Endothelial cell of umbilical vein (primary cell): ENCODE measurements at regions of chr3 and their contacts with region 1.

Region 1: GRCh38 chr3:11719406-11720230 is 75.9 kb upstream of the VGLL4 start:
- DNase-seq: peak; percentile 66
- H3K4me3 ChIP-seq: peak overlapping the region; percentile 92 to 96 (median 93)
- H3K27ac ChIP-seq: peak overlapping the region; percentile 76
- H3K4me1 ChIP-seq: peaks cover 21% of the 10 kb centered on the region
- H3K27me3 ChIP-seq: peaks cover under 1 to 9% of the 10 kb centered on the region in 2 experiments
- CTCF ChIP-seq: no peak
- POLR2A ChIP-seq: no peak

Region 2: GRCh38 chr3:11662402-11662990 is 57.1 kb before region 1 on chr3:
- CTCF ChIA-PET with region 1: no interaction called
- POLR2A ChIA-PET with region 1: no interaction called
- dilution Hi-C with region 1: no loop called
- intact Hi-C with region 1: loop called (anchors 2 kb)
- DNase-seq: peak; percentile 31
- H3K4me3 ChIP-seq: no peak overlapping the region
- H3K27ac ChIP-seq: no peak overlapping the region
- H3K4me1 ChIP-seq: peaks cover 12% of the 10 kb centered on the region
- H3K27me3 ChIP-seq: no peaks in the 10 kb centered on the region
- CTCF ChIP-seq: peak; percentile 33 to 43
- POLR2A ChIP-seq: no peak

Region 3: DNA sequence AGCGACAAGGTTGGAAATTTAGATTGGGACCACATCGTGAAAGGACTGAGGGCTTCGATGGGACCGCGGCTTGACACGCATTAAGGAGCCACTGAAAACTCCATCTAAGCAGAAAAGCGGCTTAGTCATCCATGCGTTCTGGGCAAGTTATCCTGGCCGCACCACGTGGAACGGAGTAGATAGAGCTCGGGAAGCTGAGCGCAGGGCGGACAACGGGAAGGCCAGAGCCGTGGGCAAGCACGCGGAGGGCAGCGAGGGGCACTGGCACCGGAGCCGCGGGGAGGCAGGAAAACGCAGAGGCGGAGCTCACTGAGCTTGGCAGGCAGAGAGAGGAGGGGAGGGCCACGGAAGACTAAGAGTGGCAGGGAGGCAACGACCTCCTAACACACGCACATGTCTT is 14.6 kb before region 1 on chr3:
- CTCF ChIA-PET with region 1: interaction called, 4 read pairs
- POLR2A ChIA-PET with region 1: no interaction called
- dilution Hi-C with region 1: no loop called
- intact Hi-C with region 1: loop called (anchors 1 kb)
- DNase-seq: peak; percentile 82
- H3K4me3 ChIP-seq: no peak overlapping the region
- H3K27ac ChIP-seq: no peak overlapping the region
- H3K4me1 ChIP-seq: no peaks in the 10 kb centered on the region
- H3K27me3 ChIP-seq: no peaks in the 10 kb centered on the region
- CTCF ChIP-seq: no peak
- POLR2A ChIP-seq: no peak

Region 4: GRCh38 chr3:11764931-11765363 is 45.3 kb after region 1 on chr3:
- CTCF ChIA-PET with region 1: interaction called, 5 read pairs
- POLR2A ChIA-PET with region 1: no interaction called
- dilution Hi-C with region 1: no loop called
- intact Hi-C with region 1: loop called (anchors 2 kb)
- DNase-seq: peak; percentile 94
- H3K4me3 ChIP-seq: no peak overlapping the region
- H3K27ac ChIP-seq: peak overlapping the region; percentile 89
- H3K4me1 ChIP-seq: peaks cover 9% of the 10 kb centered on the region
- H3K27me3 ChIP-seq: no peaks in the 10 kb centered on the region
- CTCF ChIP-seq: no peak
- POLR2A ChIP-seq: peak; percentile 47

Region 5: DNA sequence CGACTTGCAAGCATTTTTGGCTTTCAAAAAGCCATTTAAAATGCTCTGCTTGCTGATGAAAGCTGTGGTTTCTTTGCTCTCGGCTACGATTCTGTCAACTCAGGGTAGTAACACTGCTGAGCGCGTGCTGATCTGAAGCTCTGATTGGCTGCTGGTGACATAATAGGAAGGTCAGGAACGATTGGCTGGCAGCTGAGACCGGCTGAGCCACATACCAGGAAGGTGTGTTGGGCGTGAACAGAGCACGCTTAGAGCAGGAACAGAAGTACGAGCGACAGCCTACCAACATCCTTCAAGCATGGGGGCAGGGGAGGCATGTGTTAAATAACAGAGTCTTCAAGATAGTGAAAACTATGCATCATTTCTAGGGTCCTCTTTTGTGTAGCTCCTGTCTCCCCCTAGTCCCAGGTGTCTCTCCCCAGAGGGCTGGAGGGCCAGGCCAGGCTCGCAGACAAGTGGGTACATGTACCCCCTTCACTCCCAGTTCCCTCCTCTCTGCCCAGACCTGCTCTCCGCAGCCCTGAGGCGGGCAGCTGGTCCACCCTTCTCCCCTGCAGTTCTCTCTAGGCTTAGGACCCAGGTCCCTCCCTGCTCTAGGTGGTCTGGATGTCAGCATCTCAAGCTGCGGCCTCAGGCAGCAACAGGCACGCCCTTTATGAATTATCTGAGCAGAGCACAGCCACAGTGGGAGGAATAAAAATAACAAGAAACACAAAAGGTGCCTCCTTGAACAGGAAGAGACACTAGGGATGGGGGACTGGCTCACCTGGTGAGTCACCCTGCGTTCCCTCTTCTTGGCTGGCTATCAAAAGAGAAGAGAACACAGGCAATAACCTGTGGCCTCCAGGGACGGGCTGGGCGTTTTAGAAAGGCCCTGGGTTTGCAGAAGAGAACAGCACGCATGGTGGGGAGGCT is 51.1 kb after region 1 on chr3:
- CTCF ChIA-PET with region 1: no interaction called
- POLR2A ChIA-PET with region 1: no interaction called
- dilution Hi-C with region 1: no loop called
- intact Hi-C with region 1: loop called (anchors 2 kb)
- DNase-seq: peak; percentile 85
- H3K4me3 ChIP-seq: no peak overlapping the region
- H3K27ac ChIP-seq: no peak overlapping the region
- H3K4me1 ChIP-seq: peaks cover 11% of the 10 kb centered on the region
- H3K27me3 ChIP-seq: no peaks in the 10 kb centered on the region
- CTCF ChIP-seq: no peak
- POLR2A ChIP-seq: no peak

Region 6: DNA sequence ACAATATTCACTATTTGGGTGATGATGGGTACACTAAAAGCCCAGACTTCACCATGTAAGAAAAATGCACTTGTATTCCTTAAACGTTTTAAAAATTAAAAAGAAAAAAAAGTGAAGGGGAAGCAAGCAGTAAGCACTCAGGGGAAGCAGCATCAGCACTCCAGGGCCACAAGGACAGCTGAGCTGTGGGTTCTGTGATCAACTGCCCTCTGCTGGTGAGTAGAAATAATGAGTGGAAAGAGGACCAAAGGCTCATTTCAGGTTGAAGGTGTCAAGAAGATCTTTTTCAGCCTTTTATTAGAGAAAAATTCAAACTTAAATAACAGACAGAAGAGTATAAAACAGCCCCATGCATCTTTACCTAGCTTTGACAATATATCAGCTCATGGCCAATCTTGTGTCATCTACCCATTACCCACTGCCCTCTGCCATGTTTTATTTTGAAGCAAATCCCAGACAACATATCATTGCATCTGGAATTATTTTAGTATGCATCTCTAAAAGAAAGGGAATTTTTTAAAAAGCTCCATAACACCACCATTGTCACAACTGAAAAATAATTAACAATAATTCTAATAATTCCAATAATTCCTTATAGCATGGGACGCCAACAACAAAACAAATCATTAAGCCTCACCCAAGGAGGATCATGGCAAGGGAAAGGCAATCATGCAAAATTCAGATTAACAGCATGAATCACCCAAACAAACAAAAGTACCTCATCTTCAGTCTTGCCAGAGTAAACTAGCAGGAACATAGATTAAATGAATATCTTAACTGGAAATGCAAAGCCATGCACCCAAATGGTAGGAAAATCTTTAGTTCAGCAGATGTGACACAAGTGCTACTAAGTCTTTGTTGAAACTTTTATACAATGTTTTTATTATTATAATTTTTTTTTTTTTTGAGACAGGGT is 84.6 kb after region 1 on chr3:
- CTCF ChIA-PET with region 1: interaction called, 4 read pairs
- POLR2A ChIA-PET with region 1: no interaction called
- dilution Hi-C with region 1: no loop called
- intact Hi-C with region 1: loop called (anchors 1 kb)
- DNase-seq: peak; percentile 53
- H3K4me3 ChIP-seq: no peak overlapping the region
- H3K27ac ChIP-seq: no peak overlapping the region
- H3K4me1 ChIP-seq: no peaks in the 10 kb centered on the region
- H3K27me3 ChIP-seq: no peaks in the 10 kb centered on the region
- CTCF ChIP-seq: peak; percentile 68 to 70
- POLR2A ChIP-seq: no peak

Region 7: GRCh38 chr3:11846281-11847034 is 126.8 kb after region 1 on chr3 and contains the start of gene TAMM41:
- CTCF ChIA-PET with region 1: no interaction called
- POLR2A ChIA-PET with region 1: no interaction called
- dilution Hi-C with region 1: no loop called
- intact Hi-C with region 1: loop called (anchors 5 kb)
- DNase-seq: peak; percentile 91
- H3K4me3 ChIP-seq: peak within 1 kb of the TSS; percentile 36 to 66 (median 60)
- H3K27ac ChIP-seq: no peak within 1 kb of the TSS
- H3K4me1 ChIP-seq: peaks cover 15% of the 10 kb centered on the region
- H3K27me3 ChIP-seq: peaks cover 3 to 5% of the 10 kb centered on the region in 2 experiments
- CTCF ChIP-seq: peak; percentile 70 to 89
- POLR2A ChIP-seq: peak; percentile 95
- total RNA-seq, gene TAMM41: 25.1 and 29.7 TPM in 2 replicates